ENCODE measurements at regions of chr22 and their contacts with region 1.

Region 1: GRCh38 chr22:24951942-24952836 is at the start of gene KIAA1671:
- DNase-seq: peak; percentile 64 to 94
- H3K4me3 ChIP-seq: peak within 1 kb of the TSS; percentile 50
- CTCF ChIP-seq: peak in 1 of 3 donors; percentile 88
- POLR2A ChIP-seq: no peak
- total RNA-seq, gene KIAA1671: 60.0 to 87.8 (median 85.1) TPM

Region 2: GRCh38 chr22:24834845-24835570 is 117.2 kb before region 1 on chr22:
- intact Hi-C with region 1: no loop called
- DNase-seq: no peak
- H3K4me3 ChIP-seq: no peak overlapping the region
- CTCF ChIP-seq: no peak
- POLR2A ChIP-seq: no peak

Region 3: DNA sequence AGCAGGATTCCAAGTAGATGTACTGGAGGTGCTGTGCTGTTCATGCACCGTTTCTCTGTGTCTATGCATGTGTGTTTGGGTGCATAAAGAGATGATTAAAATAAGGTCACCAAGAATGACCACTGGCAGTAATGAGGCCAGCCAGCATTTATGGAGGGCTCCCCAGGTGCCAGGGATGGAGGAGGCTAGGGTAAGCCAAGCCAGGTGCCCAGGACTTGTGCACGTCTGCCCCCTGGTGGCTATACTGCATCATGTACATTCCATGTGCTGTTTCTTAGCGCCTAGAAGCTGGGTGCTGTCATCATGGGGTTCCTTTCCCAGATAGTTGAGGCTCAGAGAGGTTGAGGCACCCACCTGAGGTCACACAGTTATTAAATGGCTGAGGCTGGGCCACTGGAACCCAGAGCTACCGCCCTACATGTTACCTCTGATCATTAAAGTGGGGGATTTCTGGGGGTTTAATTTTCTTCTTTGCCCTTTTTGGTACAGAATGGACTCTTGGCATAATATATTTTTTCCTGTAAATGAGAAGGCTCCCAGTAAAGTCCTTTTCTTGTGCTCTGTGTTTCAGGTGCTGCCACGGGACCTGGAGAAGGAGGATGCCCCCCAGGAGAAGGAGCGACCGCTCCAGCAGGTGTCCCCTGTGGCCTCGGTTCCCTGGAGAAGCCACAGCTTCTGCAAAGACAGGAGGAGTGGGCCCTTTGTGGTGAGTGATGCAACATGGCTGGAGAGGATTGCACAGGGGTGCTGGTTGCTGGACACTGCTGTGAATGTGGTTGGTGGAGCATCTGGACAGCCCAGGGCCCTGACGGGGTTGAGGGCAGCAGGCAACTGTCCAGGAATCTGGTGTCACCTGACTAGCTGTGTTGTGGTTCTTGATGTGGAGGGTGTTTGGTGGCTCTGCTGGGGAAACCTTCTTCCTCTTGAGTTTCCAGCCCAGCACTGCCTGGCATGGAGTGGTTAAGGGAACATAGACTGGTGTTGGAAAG is 96.8 kb after region 1 on chr22:
- intact Hi-C with region 1: loop called (anchors 5 kb)
- DNase-seq: peak; percentile 37 to 92
- H3K4me3 ChIP-seq: no peak overlapping the region
- CTCF ChIP-seq: peak in 1 of 3 donors; percentile 55
- POLR2A ChIP-seq: no peak

Region 4: GRCh38 chr22:25623310-25623734 is 671.1 kb after region 1 on chr22:
- intact Hi-C with region 1: no loop called
- DNase-seq: no peak
- H3K4me3 ChIP-seq: no peak overlapping the region
- CTCF ChIP-seq: no peak
- POLR2A ChIP-seq: no peak

Measured in lower leg skin (tissue), 4 donors.